CD8-positive, alpha-beta T cell (primary cell): ENCODE measurements at regions of chr14 and their contacts with region 1.

Region 1: GRCh38 chr14:55270832-55271565 is at the start of gene FBXO34:
- DNase-seq: peak; percentile 98 to 100 (median 100)
- ATAC-seq: peak; percentile 94
- H3K4me3 ChIP-seq: peak within 1 kb of the TSS; percentile 92 to 99
- H3K4me3 Mint-ChIP-seq: peak within 1 kb of the TSS; percentile 89
- H3K27ac ChIP-seq: peak within 1 kb of the TSS; percentile 71 to 85
- H3K27ac Mint-ChIP-seq: peak within 1 kb of the TSS; percentile 94
- H3K4me1 ChIP-seq: peaks cover 12% of the 10 kb centered on the region
- H3K4me1 Mint-ChIP-seq: peaks cover 39% of the 10 kb centered on the region
- H3K27me3 ChIP-seq: no peaks in the 10 kb centered on the region
- H3K27me3 Mint-ChIP-seq: no peaks in the 10 kb centered on the region
- CTCF ChIP-seq: peak; percentile 99
- total RNA-seq, gene FBXO34: 42.6 to 46.3 TPM

Region 2: GRCh38 chr14:54396493-54397335 is 874.3 kb before region 1 on chr14 and contains the start of gene CDKN3:
- CTCF ChIA-PET with region 1: no interaction called
- POLR2A ChIA-PET with region 1: no interaction called
- intact Hi-C with region 1: loop called in 1 of 2 experiments (anchors 5 kb)
- DNase-seq: peak; percentile 94 to 98 (median 96)
- ATAC-seq: peak; percentile 95
- H3K4me3 ChIP-seq: peak within 1 kb of the TSS; percentile 80 to 96
- H3K4me3 Mint-ChIP-seq: peak within 1 kb of the TSS; percentile 86
- H3K27ac ChIP-seq: peak within 1 kb of the TSS; percentile 23 to 46
- H3K27ac Mint-ChIP-seq: peak within 1 kb of the TSS; percentile 47
- H3K4me1 ChIP-seq: peaks cover 4% of the 10 kb centered on the region
- H3K4me1 Mint-ChIP-seq: peaks cover 9% of the 10 kb centered on the region
- H3K27me3 ChIP-seq: no peaks in the 10 kb centered on the region
- H3K27me3 Mint-ChIP-seq: no peaks in the 10 kb centered on the region
- CTCF ChIP-seq: no peak
- total RNA-seq, gene CDKN3: 0.56 to 0.68 TPM

Region 3: DNA sequence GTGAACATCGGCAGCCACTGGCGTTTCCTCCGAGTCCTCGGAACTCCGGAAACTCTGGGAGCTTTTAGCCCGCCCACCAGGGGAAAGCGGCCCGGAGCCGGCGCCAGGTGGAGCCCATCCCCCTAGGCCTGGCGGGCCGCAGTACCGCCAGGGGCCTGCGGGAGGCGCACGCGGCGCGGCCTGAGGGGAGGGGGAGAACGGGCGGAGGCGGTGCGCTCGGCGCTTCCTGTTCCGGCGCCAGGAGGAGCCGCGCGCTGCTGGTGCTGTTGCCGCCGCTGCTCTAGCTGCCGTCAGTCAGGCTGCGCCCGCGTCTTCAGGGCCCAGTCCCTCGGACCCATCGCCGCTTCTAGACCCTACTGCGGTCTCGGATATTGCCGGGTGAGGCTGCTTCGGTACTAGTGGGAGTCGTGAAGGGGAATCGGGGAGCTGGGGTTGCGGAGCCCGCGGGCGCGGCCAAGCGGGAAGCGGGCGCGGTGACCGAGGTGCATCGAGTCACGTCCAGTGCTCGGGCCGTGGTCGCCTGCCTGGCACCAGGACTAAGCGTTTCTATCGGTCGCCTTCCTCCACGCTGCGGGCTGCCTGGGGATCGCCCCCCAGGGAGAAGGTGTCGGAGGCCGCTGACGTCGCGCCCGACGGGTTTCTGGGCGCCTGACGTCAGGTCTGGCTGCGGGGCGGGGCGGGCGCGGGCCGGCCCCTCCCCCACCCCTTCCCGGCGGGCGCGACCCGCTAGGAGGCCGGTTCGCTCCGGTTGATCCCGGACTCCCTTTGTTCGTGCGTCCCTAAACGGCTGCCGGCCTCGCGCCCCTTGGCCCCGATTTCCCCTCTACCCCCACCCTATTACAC is 219.4 kb before region 1 on chr14 and contains the start of gene MAPK1IP1L:
- CTCF ChIA-PET with region 1: interaction called, 7 read pairs
- POLR2A ChIA-PET with region 1: no interaction called
- intact Hi-C with region 1: loop called (anchors 2 to 10 kb)
- DNase-seq: peak; percentile 83 to 94 (median 89)
- ATAC-seq: peak; percentile 94
- H3K4me3 ChIP-seq: peak within 1 kb of the TSS; percentile 99 to 100
- H3K4me3 Mint-ChIP-seq: peak within 1 kb of the TSS; percentile 88
- H3K27ac ChIP-seq: peak within 1 kb of the TSS; percentile 100
- H3K27ac Mint-ChIP-seq: peak within 1 kb of the TSS; percentile 94
- H3K4me1 ChIP-seq: peaks cover 27% of the 10 kb centered on the region
- H3K4me1 Mint-ChIP-seq: peaks cover 47% of the 10 kb centered on the region
- H3K27me3 ChIP-seq: no peaks in the 10 kb centered on the region
- H3K27me3 Mint-ChIP-seq: no peaks in the 10 kb centered on the region
- CTCF ChIP-seq: peak; percentile 100
- total RNA-seq, gene MAPK1IP1L: 207 to 212 TPM

Region 4: DNA sequence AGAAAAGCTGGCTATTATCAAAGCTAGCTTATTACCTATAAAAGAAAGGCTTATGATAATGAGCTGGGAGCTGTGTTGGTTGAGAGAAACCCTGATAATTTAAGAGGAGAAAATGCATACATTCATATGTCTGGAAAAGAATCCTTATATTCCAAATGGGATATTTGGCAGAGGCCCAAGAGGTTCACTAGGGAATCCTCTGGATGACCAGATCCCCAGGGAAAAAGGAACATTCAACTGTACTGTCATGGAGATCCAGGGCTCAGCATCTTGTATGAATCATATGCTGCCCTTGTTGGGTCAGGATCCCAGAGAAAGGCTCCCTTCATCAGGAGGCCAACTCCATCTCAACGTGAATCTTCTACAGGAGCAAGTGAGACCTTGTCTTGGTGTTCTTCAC is 16.4 kb before region 1 on chr14:
- CTCF ChIA-PET with region 1: interaction called, 11 read pairs
- POLR2A ChIA-PET with region 1: no interaction called
- intact Hi-C with region 1: no loop called
- DNase-seq: no peak
- ATAC-seq: no peak
- H3K4me3 ChIP-seq: no peak overlapping the region
- H3K4me3 Mint-ChIP-seq: no peak overlapping the region
- H3K27ac ChIP-seq: no peak overlapping the region
- H3K27ac Mint-ChIP-seq: no peak overlapping the region
- H3K4me1 ChIP-seq: no peaks in the 10 kb centered on the region
- H3K4me1 Mint-ChIP-seq: no peaks in the 10 kb centered on the region
- H3K27me3 ChIP-seq: peaks cover 0 to 2% of the 10 kb centered on the region in 2 experiments
- H3K27me3 Mint-ChIP-seq: peaks cover 9% of the 10 kb centered on the region
- CTCF ChIP-seq: no peak

Region 5: GRCh38 chr14:55348766-55349453 is 77.9 kb after region 1 on chr14:
- CTCF ChIA-PET with region 1: interaction called, 60 read pairs
- POLR2A ChIA-PET with region 1: no interaction called
- intact Hi-C with region 1: loop called (anchors 1 kb)
- DNase-seq: no peak
- ATAC-seq: no peak
- H3K4me3 ChIP-seq: no peak overlapping the region
- H3K4me3 Mint-ChIP-seq: no peak overlapping the region
- H3K27ac ChIP-seq: no peak overlapping the region
- H3K27ac Mint-ChIP-seq: peak overlapping the region; percentile 71
- H3K4me1 ChIP-seq: no peaks in the 10 kb centered on the region
- H3K4me1 Mint-ChIP-seq: peaks cover 49% of the 10 kb centered on the region
- H3K27me3 ChIP-seq: no peaks in the 10 kb centered on the region
- H3K27me3 Mint-ChIP-seq: no peaks in the 10 kb centered on the region
- CTCF ChIP-seq: no peak

Region 6: DNA sequence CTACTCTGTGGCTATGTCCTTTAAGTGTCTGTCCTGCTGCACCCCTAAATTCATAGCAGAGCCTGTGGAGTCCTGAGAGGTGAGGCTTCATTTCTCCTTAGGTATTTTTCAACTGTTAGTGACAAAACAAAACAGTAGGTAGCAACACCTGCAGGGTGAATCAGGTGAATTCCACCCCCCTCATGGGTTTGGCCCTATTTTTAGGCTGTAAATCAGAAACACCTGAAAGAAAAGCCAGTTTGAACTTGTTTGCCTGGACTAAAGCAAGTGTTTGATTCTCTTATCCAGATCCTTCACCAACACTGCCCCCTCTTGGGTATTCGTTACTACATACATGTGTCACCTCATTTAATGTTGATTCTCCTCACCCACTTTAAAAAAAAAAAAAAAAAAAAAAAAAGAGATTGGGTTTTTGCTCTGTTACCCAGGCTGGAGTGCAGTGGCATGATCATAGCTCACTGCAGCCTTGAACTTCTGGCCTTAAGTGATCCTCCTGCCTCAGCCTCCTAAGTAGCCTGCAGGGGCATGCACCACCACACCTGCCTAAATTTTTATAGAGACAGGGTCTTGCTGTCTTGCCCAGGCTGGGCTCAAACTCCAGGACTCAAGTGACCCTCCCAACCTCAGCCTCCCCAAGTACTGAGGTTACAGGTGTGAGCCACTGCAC is 159.2 kb after region 1 on chr14:
- CTCF ChIA-PET with region 1: interaction called, 10 read pairs
- POLR2A ChIA-PET with region 1: no interaction called
- intact Hi-C with region 1: loop called (anchors 1 to 10 kb)
- DNase-seq: peak in 8 of 9 experiments; percentile 19 to 83 (median 46)
- ATAC-seq: peak; percentile 92
- H3K4me3 ChIP-seq: no peak overlapping the region
- H3K4me3 Mint-ChIP-seq: no peak overlapping the region
- H3K27ac ChIP-seq: no peak overlapping the region
- H3K27ac Mint-ChIP-seq: peak overlapping the region; percentile 72
- H3K4me1 ChIP-seq: peaks cover 24% of the 10 kb centered on the region
- H3K4me1 Mint-ChIP-seq: peaks cover 33% of the 10 kb centered on the region
- H3K27me3 ChIP-seq: no peaks in the 10 kb centered on the region
- H3K27me3 Mint-ChIP-seq: no peaks in the 10 kb centered on the region
- CTCF ChIP-seq: peak; percentile 50

Region 7: DNA sequence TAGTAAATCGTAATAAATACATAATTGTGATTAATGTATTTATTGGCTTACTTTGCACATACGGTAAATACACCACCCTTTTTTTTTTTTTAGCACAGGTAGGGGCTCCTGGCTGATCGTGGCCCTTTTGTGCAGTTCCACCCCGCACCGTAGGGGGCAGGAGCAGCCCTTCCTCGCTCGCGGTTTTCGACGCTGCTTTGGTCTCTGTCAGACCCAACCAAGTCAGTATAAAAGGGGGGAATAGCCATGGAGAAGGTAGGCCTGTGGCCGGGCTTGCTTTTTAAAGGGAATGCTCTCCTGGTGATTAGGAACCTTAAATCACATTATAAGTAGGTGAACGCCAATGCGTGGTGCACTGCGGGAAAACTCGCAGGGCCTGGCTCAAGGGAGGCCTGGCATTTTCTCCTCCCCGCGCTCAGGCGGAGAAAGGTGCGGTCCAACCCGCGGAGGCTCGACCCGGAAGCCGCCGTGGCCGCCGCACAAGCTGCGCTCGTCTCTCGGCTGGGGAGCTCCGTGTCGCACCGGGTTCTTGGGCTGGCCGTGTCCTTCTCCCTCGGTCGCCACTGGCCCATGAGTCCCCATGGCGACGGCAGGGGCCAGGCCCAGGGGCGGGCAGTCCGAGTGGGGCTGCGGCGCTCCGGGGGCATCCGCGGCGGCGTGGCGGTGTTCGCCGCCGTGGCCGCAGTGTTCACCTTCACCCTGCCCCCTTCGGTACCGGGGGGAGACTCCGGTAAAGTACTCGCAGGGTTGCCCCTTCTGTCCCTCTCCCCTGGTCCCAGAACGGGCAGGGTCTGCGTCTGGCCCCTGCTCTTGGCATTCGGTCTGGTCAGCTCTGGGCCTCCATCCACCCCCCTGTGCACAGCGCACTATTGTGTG is 1308.6 kb after region 1 on chr14 and contains the start of gene TMEM260:
- CTCF ChIA-PET with region 1: no interaction called
- POLR2A ChIA-PET with region 1: no interaction called
- intact Hi-C with region 1: loop called in 1 of 2 experiments (anchors 10 kb)
- DNase-seq: peak; percentile 84 to 95 (median 91)
- ATAC-seq: peak; percentile 93
- H3K4me3 ChIP-seq: peak within 1 kb of the TSS; percentile 74 to 83
- H3K4me3 Mint-ChIP-seq: peak within 1 kb of the TSS; percentile 90
- H3K27ac ChIP-seq: peak within 1 kb of the TSS; percentile 72 to 75
- H3K27ac Mint-ChIP-seq: peak within 1 kb of the TSS; percentile 94
- H3K4me1 ChIP-seq: peaks cover 27% of the 10 kb centered on the region
- H3K4me1 Mint-ChIP-seq: peaks cover 40% of the 10 kb centered on the region
- H3K27me3 ChIP-seq: no peaks in the 10 kb centered on the region
- H3K27me3 Mint-ChIP-seq: peaks cover 2% of the 10 kb centered on the region
- CTCF ChIP-seq: peak; percentile 82
- total RNA-seq, gene TMEM260: 4.3 to 6.4 TPM